ENCODE measurements at regions of chr13 and their contacts with region 1.

Region 1: DNA sequence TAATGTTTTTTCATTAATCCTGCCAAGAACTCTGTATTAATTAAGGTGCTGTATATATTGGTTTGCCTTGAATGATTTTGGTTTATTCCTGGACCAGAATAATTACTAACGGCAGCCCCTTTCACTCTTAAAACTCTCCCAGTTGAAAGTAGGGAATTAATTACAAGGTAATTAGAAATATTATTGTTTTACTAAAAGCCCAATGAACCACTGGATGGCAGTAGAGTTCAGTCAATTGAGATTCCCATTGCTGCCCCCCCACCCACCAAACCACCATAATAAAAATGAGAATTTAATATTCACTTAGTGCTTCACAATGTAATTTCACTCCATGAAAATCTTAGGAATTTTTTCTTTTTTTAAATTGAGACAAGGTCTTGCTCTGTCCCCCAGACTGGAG is 13.7 kb downstream of the WBP4 start:
- DNase-seq: no peak
- H3K4me3 ChIP-seq: no peak overlapping the region
- H3K27ac ChIP-seq: no peak overlapping the region
- H3K4me1 ChIP-seq: no peaks in the 10 kb centered on the region
- H3K27me3 ChIP-seq: no peaks in the 10 kb centered on the region
- CTCF ChIP-seq: peak; percentile 44 to 67 (median 52)
- POLR2A ChIP-seq: no peak

Region 2: GRCh38 chr13:41222259-41222852 is 147.3 kb after region 1 on chr13:
- intact Hi-C with region 1: loop called (anchors 10 kb)
- DNase-seq: peak; percentile 77
- H3K4me3 ChIP-seq: no peak overlapping the region
- H3K27ac ChIP-seq: no peak overlapping the region
- H3K4me1 ChIP-seq: no peaks in the 10 kb centered on the region
- H3K27me3 ChIP-seq: no peaks in the 10 kb centered on the region
- CTCF ChIP-seq: peak; percentile 57 to 76 (median 71)
- POLR2A ChIP-seq: no peak

Region 3: DNA sequence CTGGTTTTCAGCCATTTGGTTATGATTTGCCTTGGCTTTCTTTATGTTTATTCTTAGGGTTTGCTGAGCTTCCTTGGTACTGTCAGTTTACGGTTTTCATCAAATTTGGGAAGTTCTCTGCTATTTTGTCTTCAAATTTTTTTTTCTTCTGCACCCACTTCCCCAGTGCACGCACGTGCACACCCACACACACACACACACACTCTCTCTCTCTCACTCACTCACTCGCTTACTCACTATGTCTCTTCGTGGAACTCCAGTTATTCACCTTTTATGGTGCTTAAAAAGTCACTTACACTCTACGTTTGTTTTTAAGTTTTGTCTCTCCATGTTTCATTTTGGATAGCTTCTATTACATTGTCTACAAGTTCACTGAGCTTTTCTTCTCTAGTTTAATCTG is 1204.0 kb after region 1 on chr13:
- intact Hi-C with region 1: no loop called
- DNase-seq: no peak
- H3K4me3 ChIP-seq: no peak overlapping the region
- H3K27ac ChIP-seq: no peak overlapping the region
- H3K4me1 ChIP-seq: peaks cover 1% of the 10 kb centered on the region
- H3K27me3 ChIP-seq: no peaks in the 10 kb centered on the region
- CTCF ChIP-seq: no peak
- POLR2A ChIP-seq: no peak

Measured in testis (tissue), 5 donors.